ENCODE measurements at regions of chr6 and their contacts with region 1.

Region 1: GRCh38 chr6:143549221-143549941 is 37.9 kb upstream of the FUCA2 start:
- DNase-seq: peak; percentile 30
- H3K4me3 Mint-ChIP-seq: no peak overlapping the region
- H3K27ac Mint-ChIP-seq: peak overlapping the region; percentile 60
- H3K4me1 Mint-ChIP-seq: peaks cover 87% of the 10 kb centered on the region
- H3K27me3 Mint-ChIP-seq: no peaks in the 10 kb centered on the region

Region 2: DNA sequence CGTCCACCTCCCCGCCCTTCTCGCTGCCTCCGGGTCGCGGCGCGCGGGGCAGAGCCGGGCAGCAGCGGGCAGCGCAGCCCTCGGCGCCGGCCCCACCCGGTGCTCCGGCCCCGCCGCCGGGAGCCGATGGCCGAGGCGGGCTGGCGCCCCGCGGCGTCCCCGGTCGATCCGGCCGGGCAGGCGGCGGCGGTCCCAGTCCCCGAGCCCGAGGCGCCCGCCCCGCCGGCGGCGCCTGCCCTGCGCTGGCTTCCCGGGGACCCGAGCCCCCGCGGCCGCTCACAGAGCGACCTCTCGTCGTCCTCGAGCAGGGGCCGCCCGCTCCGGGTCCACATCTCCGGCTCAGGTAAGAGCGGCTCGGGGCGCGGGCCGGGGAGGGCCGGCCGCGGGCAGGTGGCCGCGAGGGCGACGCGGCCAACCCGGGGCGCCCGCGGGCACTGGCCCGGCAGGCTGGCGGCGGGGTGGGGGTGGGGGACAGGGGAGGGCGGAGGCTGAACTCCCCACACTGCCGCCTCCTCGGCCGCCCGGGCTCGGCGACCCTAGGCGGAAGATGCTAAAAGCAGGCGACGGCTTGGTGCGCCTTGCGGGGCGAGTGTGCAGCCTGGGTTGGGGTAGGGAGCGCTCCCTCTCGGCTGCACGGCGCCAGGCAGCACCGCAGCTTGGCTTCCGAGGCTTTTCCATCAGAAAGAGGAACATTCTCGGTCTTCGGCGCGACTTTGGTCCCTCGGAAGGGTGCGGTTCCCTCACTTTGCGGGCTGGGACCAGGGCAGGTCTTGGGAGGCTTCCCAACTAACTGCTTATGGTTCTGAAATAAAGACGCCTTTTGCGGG is 12.3 kb before region 1 on chr6:
- intact Hi-C with region 1: loop called (anchors 1 kb)
- DNase-seq: peak; percentile 61
- H3K4me3 Mint-ChIP-seq: peak overlapping the region; percentile 80
- H3K27ac Mint-ChIP-seq: peak overlapping the region; percentile 64
- H3K4me1 Mint-ChIP-seq: peaks cover 39% of the 10 kb centered on the region
- H3K27me3 Mint-ChIP-seq: no peaks in the 10 kb centered on the region

Region 3: DNA sequence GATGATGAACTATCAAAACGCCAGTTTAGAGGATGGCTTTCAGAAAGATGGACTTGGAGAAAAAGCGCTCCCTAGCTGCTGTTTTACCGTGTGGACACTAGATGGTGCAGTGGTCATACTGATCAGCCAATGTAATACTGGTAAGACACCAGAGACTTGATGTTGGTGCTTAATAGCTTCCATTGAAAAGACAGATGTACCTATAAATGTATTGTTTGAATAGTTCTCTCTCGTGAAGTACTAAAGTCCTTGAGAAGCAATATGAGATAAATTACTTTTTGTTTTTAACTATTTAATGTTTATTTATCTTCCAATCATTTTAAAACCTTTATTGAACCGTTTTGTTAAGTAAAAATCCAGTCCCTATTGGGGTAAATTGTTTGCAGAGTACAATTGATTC is 26.1 kb after region 1 on chr6:
- intact Hi-C with region 1: no loop called
- DNase-seq: peak; percentile 36
- H3K4me3 Mint-ChIP-seq: no peak overlapping the region
- H3K27ac Mint-ChIP-seq: no peak overlapping the region
- H3K4me1 Mint-ChIP-seq: peaks cover 7% of the 10 kb centered on the region
- H3K27me3 Mint-ChIP-seq: no peaks in the 10 kb centered on the region

Region 4: GRCh38 chr6:143642403-143642802 is 93.0 kb after region 1 on chr6:
- intact Hi-C with region 1: no loop called
- DNase-seq: no peak
- H3K4me3 Mint-ChIP-seq: no peak overlapping the region
- H3K27ac Mint-ChIP-seq: no peak overlapping the region
- H3K4me1 Mint-ChIP-seq: peaks cover 10% of the 10 kb centered on the region
- H3K27me3 Mint-ChIP-seq: no peaks in the 10 kb centered on the region

Region 5: DNA sequence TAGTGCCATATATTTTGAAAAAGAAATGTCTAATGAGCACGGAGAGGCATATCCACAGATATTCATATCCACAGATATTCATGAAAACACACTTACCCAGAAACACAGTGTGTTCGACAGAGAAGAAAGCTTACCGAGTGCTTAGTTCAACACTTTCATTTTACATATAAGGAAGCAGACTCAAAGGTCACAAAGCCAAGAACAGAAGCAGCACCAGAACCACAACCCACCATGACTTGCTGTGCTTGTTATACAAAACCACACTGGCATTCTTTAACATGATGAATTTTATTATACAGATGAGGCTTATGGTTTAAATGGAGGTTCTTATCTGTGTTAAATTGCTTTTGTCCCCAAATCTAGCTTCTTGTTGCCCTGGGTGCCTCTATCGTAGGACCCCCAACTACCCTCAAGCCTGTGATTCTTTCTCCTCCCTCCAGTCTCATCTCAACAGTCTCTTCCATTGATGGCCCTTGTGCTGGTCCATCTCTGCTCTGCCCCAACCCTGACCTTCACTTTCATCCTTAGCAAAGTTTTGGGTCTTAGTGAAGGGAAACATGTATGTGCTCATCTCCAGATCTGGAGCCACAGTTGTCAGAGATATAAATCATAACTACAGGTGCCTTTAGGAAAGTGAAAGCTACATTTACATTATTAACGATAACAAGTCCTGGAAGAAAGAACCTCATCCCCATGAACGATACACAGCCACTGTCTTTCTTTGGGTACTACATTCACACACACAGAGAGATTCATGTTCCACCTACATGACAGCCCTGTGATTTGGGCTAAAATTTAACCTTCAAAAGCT is 505.9 kb after region 1 on chr6:
- intact Hi-C with region 1: loop called (anchors 5 kb)
- DNase-seq: peak; percentile 36
- H3K4me3 Mint-ChIP-seq: peak overlapping the region; percentile 75
- H3K27ac Mint-ChIP-seq: peak overlapping the region; percentile 94
- H3K4me1 Mint-ChIP-seq: peaks cover 40% of the 10 kb centered on the region
- H3K27me3 Mint-ChIP-seq: no peaks in the 10 kb centered on the region

Measured in activated T-helper 2 cell treated with anti-CD3 and anti-CD28 coated beads, Interferon-gamma antibody, Interleukin-2, Interleukin-4, amounts not matched to agents 10 μg/mL and 5 μg/mL and 100 μg/mL, durations not matched to agents 14 hours and 24 hours and 36 hours (primary cell).